ENCODE measurements at regions of chr4 and their contacts with region 1.

Region 1: DNA sequence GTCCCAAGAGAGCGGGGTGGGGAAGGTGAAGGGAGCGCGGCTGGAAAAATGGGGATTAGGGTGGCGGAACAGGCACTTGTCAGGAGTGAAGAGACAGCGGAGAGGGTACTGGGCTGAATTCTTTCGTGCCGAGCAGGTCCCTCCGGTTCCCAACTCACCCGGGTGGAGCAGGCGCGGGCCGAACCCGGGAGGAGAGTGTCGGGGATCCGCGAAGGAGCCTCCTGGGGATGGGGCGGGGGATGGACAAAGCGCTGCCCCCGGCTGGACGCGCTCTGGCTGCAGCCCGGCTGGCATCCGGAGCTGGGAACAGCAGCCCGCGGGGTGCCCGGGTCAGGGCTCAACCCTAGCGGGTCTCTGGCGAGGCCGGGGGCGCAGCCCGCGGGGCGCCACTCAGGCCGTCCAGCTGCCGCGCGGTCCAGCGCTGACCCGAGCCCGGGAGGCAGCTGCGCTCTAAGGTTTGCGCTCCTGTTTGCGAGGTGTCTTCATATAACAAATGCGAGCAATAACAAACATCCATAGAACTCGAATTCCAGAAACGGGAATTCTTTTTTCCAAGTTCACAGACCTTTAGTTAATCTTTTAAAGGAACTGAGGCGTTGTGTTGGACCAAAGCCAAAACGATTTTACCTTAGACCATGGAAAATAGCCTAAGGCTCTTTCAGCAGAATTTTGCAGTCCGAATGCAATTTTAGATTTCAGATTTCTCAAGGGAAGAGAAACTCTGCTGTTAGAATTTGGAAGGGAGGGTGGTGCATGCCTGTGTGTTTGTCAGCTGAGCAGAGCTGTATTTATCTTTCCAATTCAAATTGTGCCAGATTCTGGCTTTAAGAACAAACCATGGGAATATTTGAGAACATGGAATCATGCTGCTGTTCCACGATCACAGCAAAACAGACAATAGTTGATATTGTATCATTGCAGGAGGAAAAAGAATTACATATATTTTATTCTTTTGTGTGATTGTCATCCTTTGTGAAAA is 744 bp downstream of the NPY5R start:
- DNase-seq: no peak
- ATAC-seq: no peak
- H3K4me3 ChIP-seq: no peak overlapping the region
- H3K4me3 Mint-ChIP-seq: no peak overlapping the region
- H3K27ac ChIP-seq: no peak overlapping the region
- H3K27ac Mint-ChIP-seq: no peak overlapping the region
- H3K4me1 ChIP-seq: peaks cover 0 to 8% of the 10 kb centered on the region in 2 donors
- H3K4me1 Mint-ChIP-seq: peaks cover 7% of the 10 kb centered on the region
- H3K27me3 ChIP-seq: peaks cover 0 to 17% (median 11%) of the 10 kb centered on the region in 4 experiments
- H3K27me3 Mint-ChIP-seq: peaks cover 40% of the 10 kb centered on the region
- CTCF ChIP-seq: no peak

Region 2: DNA sequence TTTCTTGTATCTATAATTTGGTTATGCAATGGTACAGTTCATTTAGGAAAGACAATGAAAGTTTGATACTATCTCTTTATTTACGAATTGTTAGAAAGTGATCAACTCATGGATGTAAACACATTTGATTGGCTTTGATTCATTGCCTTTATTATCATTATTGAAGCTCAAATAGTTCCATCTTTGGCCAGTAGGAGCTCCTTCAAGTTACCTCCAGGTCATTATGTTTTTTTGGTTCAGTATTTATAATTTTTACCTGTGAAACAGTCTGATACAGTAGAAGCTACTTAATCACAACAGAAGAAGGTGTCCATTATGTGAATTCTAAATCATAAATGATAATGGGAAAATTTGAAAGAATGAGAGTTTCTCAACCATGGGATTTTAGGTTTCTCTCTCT is 11.7 kb after region 1 on chr4:
- CTCF ChIA-PET with region 1: interaction called, 3 read pairs
- POLR2A ChIA-PET with region 1: no interaction called
- intact Hi-C with region 1: loop called (anchors 1 kb)
- DNase-seq: no peak
- ATAC-seq: no peak
- H3K4me3 ChIP-seq: no peak overlapping the region
- H3K4me3 Mint-ChIP-seq: no peak overlapping the region
- H3K27ac ChIP-seq: no peak overlapping the region
- H3K27ac Mint-ChIP-seq: no peak overlapping the region
- H3K4me1 ChIP-seq: no peaks in the 10 kb centered on the region
- H3K4me1 Mint-ChIP-seq: no peaks in the 10 kb centered on the region
- H3K27me3 ChIP-seq: no peaks in the 10 kb centered on the region
- H3K27me3 Mint-ChIP-seq: peaks cover 12% of the 10 kb centered on the region
- CTCF ChIP-seq: no peak